ENCODE measurements at regions of chr1 and their contacts with region 1.

Region 1: GRCh38 chr1:214476958-214477870 is 74.2 kb downstream of the PTPN14 start:
- DNase-seq: no peak
- ATAC-seq: no peak
- H3K4me3 ChIP-seq: no peak overlapping the region; the same call in 1 of the 2 replicates
- H3K27ac ChIP-seq: peak overlapping the region; percentile 56; the same call in 1 of the 2 replicates
- H3K4me1 ChIP-seq: peaks cover 39% of the 10 kb centered on the region
- H3K27me3 ChIP-seq: no peaks in the 10 kb centered on the region
- CTCF ChIP-seq: no peak

Region 2: GRCh38 chr1:214515544-214516429 is 38.6 kb after region 1 on chr1:
- CTCF ChIA-PET with region 1: no interaction called
- POLR2A ChIA-PET with region 1: no interaction called
- intact Hi-C with region 1: loop called (anchors 5 kb)
- DNase-seq: no peak
- ATAC-seq: no peak
- H3K4me3 ChIP-seq: peak overlapping the region; percentile 37
- H3K27ac ChIP-seq: peak overlapping the region; percentile 39
- H3K4me1 ChIP-seq: peaks cover 49% of the 10 kb centered on the region
- H3K27me3 ChIP-seq: no peaks in the 10 kb centered on the region
- CTCF ChIP-seq: no peak

Region 3: GRCh38 chr1:214566158-214567104 is 89.2 kb after region 1 on chr1:
- CTCF ChIA-PET with region 1: no interaction called
- POLR2A ChIA-PET with region 1: no interaction called
- intact Hi-C with region 1: loop called (anchors 5 kb)
- DNase-seq: peak; percentile 96
- ATAC-seq: peak; percentile 64
- H3K4me3 ChIP-seq: peak overlapping the region; percentile 6; the same call in 1 of the 2 replicates
- H3K27ac ChIP-seq: peak overlapping the region; percentile 86
- H3K4me1 ChIP-seq: peaks cover 64% of the 10 kb centered on the region
- H3K27me3 ChIP-seq: no peaks in the 10 kb centered on the region
- CTCF ChIP-seq: no peak